Head of caudate nucleus (tissue), 42 donors: ENCODE measurements at regions of chr9 and their contacts with region 1.

Region 1: GRCh38 chr9:120412425-120412951 is 167.5 kb downstream of the CDK5RAP2 start:
- DNase-seq: no peak

Region 2: DNA sequence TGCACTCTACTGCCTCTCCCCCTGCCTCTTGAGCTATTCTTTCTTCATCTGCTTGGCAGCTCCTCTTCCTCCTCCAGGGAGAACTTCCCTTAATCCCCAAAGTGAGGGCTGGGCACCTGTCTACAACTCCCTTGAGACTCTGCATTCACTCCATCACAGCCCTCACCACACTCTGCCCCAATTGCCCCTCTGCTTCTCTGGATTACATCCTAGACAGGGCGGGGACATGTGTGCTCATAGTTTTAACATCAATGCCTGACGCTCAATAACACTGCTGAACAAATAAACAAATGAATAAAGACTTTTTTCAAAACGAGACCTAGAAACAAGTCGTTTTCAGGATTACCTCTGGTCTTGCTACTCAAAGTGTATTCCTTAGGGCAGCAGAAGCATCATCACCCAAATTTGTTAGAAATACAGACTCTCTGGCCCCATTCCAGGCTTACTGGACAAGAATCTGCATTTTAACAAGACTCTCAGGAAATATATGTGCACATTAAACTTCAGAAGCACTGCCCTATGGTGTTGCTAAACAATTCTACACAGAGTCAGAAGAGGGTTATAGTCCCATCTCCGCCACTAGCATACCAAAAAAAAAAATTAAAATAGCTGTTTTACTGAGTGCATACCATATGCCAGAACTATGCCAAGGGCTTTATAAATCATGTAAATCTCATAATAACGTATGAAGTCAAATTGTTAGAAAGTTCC is 51.8 kb after region 1 on chr9:
- intact Hi-C with region 1: loop called (anchors 10 kb)
- DNase-seq: no peak